ENCODE measurements at regions of chr17 and their contacts with region 1.

Region 1: GRCh38 chr17:76014184-76014924 is 12.8 kb downstream of the EVPL start:
- DNase-seq: peak; percentile 97
- H3K4me3 ChIP-seq: no peak overlapping the region
- H3K27ac ChIP-seq: no peak overlapping the region
- H3K4me1 ChIP-seq: peaks cover 10 to 13% of the 10 kb centered on the region in 2 experiments; a peak in 2 of 4 replicates
- H3K27me3 ChIP-seq: no peaks in the 10 kb centered on the region
- CTCF ChIP-seq: peak; percentile 99
- EP300 ChIP-seq: no peak
- RAD21 ChIP-seq: peak; percentile 95

Region 2: DNA sequence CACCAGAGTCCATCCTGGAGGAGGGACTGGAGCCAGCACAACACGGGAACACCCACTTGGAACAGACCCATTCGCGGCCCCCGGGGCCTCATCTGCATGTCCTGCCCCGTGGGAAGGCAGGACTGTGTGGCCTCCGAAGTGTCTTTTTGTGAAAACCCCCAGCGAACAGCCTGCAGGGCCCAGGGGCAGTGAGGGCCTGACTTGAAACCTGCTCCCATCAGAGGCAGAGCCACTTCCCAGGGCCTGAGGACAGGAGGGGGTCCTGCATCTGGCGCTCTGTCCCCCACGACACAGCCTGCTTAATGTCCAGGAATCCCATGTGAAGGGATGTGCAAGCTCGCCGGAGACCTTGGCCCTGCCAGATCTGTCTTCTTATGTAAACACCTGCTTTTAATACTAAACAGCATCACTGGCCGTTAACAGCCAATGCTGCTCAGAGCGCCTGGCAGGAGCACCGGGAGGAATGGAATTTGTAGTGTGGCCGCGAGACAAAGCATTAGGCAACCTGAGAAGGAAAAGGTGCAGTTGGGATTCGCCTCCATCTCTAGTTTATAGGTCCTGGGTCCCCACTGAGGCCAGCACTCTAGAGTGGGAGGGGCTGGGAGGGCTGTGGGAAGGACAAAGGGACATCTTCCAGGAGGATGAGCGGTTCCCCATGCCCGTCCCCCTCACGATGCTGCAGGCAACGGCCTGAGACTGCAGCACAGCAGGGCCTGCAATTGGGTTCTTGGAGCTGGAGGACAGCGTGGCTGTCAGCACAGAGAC is 22.3 kb after region 1 on chr17:
- CTCF ChIA-PET with region 1: interaction called, 133 read pairs
- POLR2A ChIA-PET with region 1: interaction called, 4 read pairs
- DNase-seq: peak; percentile 89
- H3K4me3 ChIP-seq: no peak overlapping the region
- H3K27ac ChIP-seq: peak overlapping the region in 1 of 2 experiments; percentile 47; a peak in 2 of 4 replicates
- H3K4me1 ChIP-seq: peaks cover 0 to 12% of the 10 kb centered on the region in 2 experiments; a peak in 1 of 4 replicates
- H3K27me3 ChIP-seq: no peaks in the 10 kb centered on the region
- CTCF ChIP-seq: no peak
- EP300 ChIP-seq: peak in 1 of 2 experiments; percentile 23; a peak in 1 of 4 replicates
- RAD21 ChIP-seq: no peak

Region 3: DNA sequence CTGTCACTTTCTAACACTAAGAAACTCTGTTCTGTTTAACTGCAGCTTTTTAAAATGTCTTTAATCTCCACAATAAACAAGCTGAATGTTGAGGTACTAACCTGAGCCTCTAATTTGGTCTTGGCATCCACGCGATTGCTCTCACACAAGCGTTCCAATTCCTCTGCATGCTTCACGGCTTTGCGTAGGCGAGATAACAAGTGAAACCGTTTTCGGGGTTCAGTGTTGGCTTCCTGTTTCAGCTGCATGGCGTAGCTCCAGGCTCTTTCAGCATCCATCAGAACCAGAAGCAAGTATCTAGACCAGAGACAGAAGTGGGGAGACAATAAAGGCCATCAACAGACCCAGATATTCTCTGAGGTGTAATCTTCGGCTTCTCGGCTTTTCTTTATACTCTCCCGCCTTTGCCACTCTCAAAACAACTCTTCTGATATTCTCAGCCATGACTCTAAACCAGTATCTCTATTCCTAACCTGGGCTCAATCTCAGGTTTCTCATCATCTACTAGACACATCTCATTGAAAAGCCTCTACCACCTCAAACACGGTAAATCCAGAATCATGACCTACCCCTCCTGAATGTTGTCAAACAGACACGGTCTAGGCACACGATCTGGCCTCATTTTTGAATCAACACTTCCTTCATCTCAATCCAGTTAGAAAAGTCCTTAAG is 49.7 kb after region 1 on chr17:
- CTCF ChIA-PET with region 1: interaction called, 22 read pairs
- POLR2A ChIA-PET with region 1: no interaction called
- DNase-seq: no peak
- H3K4me3 ChIP-seq: no peak overlapping the region
- H3K27ac ChIP-seq: no peak overlapping the region
- H3K4me1 ChIP-seq: no peaks in the 10 kb centered on the region
- H3K27me3 ChIP-seq: no peaks in the 10 kb centered on the region
- CTCF ChIP-seq: no peak
- EP300 ChIP-seq: no peak
- RAD21 ChIP-seq: no peak

Region 4: DNA sequence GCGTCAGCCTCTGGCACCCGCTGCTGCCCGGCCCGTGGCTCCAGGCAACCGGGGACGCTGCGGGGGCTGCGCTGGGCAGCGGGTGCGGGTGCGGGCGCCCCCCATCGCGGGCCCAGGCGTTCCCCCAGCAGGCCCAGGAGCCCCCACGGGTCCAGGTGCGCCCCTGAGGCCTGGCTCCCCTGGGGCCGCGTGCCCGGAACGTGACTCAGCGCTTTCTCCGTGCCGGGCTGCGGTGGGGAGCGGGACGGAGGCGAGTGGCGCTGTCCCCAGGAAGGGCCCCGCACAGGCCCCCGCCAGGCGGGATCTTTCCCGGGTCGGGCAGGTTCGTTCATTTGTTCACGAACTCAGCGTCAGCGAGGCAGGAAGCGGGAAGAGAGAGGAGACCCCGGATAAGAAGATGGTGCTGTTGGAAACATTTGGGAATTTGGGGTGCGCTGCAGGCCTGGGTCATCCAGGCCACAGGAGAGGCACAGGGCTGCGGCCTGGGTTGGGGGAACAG is 107.6 kb after region 1 on chr17:
- CTCF ChIA-PET with region 1: interaction called, 12 read pairs
- POLR2A ChIA-PET with region 1: no interaction called
- DNase-seq: no peak
- H3K4me3 ChIP-seq: no peak overlapping the region
- H3K27ac ChIP-seq: no peak overlapping the region
- H3K4me1 ChIP-seq: no peaks in the 10 kb centered on the region; a peak in 1 of 4 replicates
- H3K27me3 ChIP-seq: no peaks in the 10 kb centered on the region
- CTCF ChIP-seq: no peak
- EP300 ChIP-seq: no peak
- RAD21 ChIP-seq: no peak

Region 5: DNA sequence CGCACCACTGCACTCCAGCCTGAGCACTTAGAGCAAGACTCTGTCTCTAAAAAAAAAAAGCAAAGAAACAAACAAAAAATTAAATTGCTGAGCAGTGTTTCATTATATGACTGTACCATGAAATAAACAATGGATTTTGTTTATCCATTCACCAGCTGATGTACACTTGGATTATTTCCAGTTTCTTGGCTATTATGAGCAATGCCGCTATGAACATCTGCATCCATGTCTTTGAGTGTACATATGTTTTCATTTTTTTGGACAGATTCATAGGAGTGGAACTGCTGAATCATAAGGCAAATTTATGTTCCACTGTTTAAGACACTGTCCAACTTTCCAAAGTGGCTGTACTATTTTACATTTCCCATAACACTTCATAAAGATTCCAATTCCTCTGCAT is 218.0 kb after region 1 on chr17:
- CTCF ChIA-PET with region 1: no interaction called
- POLR2A ChIA-PET with region 1: no interaction called
- DNase-seq: no peak
- H3K4me3 ChIP-seq: no peak overlapping the region
- H3K27ac ChIP-seq: no peak overlapping the region
- H3K4me1 ChIP-seq: no peaks in the 10 kb centered on the region
- H3K27me3 ChIP-seq: no peaks in the 10 kb centered on the region
- CTCF ChIP-seq: no peak
- EP300 ChIP-seq: no peak
- RAD21 ChIP-seq: no peak

Region 6: GRCh38 chr17:76272541-76273444 is 258.4 kb after region 1 on chr17:
- CTCF ChIA-PET with region 1: interaction called, 76 read pairs
- POLR2A ChIA-PET with region 1: no interaction called
- DNase-seq: peak; percentile 46
- H3K4me3 ChIP-seq: no peak overlapping the region
- H3K27ac ChIP-seq: no peak overlapping the region
- H3K4me1 ChIP-seq: peaks cover 13 to 14% of the 10 kb centered on the region in 2 experiments; a peak in 1 of 4 replicates
- H3K27me3 ChIP-seq: no peaks in the 10 kb centered on the region
- CTCF ChIP-seq: no peak
- EP300 ChIP-seq: no peak
- RAD21 ChIP-seq: no peak